Posterior cingulate gyrus (tissue), 11 donors: ENCODE measurements at regions of chr21 and their contacts with region 1.

Region 1: GRCh38 chr21:37563641-37564340 is 197.2 kb downstream of the DYRK1A start:
- DNase-seq: peak; percentile 86 to 99 (median 96)

Region 2: DNA sequence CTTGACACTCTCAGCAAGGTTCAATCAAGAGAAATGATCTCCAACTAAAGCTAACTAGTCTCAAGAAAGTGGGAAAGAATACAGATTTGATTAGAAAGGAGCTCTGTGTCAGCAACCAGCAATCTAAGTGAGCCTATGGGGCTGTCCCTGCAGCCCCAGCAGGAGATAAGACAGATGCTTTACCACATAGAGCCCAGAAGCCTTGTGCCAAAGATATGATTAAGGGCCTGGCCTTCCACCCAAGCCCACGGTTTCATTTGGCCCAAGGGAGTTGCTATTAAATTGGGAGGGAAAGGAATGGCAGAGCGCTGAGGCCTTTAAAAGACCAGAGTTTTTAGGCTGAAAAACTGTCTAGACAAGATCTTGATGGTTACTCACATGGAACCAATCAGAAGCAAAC is 672.1 kb before region 1 on chr21:
- intact Hi-C with region 1: no loop called
- DNase-seq: no peak

Region 3: DNA sequence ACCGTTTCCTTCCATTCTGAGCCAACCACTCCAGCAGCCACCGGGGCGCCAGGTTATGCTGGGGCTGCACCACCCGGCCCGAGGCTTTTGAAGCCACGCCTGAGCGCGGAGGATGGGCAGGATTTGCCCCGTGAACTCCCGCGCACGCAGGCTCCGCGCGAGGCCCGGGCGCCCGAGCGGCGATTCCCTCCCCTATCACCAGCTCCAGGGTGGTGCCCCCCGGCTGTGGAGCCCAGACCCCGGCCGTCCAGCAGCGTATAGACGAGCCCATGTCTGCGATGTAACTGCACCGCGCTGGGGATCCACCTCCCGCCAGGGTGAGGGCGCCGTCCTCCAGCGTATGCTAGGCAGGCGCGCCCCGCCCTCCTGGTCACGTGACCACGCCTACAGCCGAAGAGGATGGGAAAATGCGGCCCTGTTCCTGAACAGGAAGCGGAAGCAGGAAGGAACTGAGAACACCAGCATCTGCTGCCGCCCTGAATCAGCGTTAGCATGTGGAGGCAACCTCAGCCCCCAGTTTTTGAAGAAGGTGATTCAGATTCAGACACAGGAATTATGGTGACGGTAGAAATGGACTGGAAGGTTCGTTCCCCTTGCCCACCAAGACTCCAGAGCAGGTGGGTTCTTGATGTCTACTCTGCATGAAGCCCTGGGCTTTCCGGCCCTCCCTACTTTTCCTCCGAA is 342.7 kb before region 1 on chr21:
- intact Hi-C with region 1: loop called (anchors 5 kb)
- DNase-seq: peak; percentile 83 to 99 (median 95)

Region 4: DNA sequence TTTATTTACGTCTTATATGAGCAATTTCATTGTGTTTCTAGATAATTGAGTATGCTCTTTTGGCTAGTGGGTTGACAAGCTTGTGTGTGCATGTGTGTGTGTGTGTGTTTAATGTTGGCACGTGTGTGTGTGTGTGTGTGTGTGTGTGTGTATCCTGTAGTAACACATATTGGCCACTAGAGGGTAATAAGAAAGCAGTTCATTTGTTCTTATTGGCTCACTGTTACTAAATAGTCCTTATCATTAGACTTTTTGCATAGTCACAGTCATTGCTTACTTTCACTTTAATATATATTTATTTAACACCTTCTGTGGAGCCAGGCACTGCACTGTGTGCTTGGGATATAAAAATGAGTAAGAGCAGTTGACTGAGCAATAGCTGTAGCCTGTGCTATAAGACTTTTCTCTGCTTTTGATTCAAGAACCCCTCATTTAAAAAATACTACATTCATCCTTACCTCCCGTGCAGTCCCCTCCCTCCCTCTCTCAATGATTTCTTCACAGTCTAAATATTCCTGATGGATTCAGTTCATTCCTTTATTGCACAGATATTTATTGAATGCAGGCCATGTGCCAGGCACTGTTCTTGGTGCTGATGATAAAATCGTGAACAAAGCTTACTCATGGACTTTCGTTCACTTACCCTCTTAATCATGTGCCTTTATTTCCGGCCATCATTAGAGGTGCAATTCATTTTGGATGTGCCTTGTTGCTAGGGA is 100.5 kb before region 1 on chr21:
- intact Hi-C with region 1: loop called (anchors 10 kb)
- DNase-seq: no peak

Region 5: DNA sequence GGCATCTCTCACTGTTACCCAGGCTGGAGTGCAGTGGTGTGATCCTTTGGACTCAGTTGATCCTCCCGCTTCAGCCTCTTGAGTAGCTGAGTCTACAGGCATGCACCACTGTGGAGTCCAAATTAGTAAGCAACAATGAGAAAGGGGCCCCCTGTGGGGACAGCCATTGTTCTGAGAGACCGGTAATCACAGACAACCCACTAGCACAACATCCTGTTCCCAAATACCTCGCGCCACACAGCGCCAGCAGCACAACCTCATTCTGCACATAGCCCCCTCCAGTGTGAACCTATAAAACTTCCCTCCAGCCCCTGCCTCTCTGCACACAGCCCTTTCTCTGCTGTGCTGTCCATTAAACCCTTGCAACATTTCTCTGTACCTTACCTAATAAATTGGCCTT is 29.2 kb after region 1 on chr21:
- intact Hi-C with region 1: no loop called
- DNase-seq: no peak